GM12878 (cell line): ENCODE measurements at regions of chr15 and their contacts with region 1.

Region 1: GRCh38 chr15:89358755-89359439 is 24.3 kb upstream of the POLG start:
- DNase-seq: peak; percentile 40
- ATAC-seq: peak; percentile 96
- H3K4me3 ChIP-seq: peak overlapping the region; percentile 67; the same call in 1 of the 2 replicates
- H3K27ac ChIP-seq: no peak overlapping the region
- H3K4me1 ChIP-seq: no peaks in the 10 kb centered on the region
- H3K27me3 ChIP-seq: peaks cover 12 to 35% of the 10 kb centered on the region in 2 experiments
- CTCF ChIP-seq: peak; percentile 82 to 93 (median 89)
- EP300 ChIP-seq: no peak
- POLR2A ChIP-seq: no peak
- RAD21 ChIP-seq: peak; percentile 89

Region 2: DNA sequence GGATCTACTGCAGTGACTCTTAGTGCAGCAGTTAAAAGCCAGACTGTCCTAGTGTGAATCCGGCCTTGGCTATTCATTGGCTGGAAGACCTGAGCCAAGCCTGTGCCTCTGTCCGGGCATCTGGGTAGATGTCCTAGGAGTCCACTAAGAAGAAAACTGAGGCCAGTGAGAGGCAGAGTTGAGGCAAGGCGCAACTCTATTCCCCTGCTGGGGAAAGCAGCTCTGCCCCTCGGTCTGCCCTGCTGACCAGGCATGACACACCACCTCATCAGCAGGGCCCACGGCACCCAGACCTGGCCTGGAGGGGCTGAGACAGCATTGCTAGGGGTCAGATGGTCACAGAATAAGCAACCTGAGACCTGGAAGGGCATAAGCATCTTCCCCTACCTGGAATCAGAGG is 317.4 kb before region 1 on chr15:
- CTCF ChIA-PET with region 1: no interaction called
- POLR2A ChIA-PET with region 1: no interaction called
- RAD21 ChIA-PET with region 1: no interaction called
- SMC1A ChIA-PET with region 1: no interaction called
- in situ Hi-C with region 1: no loop called
- intact Hi-C with region 1: no loop called
- DNase-seq: no peak
- ATAC-seq: no peak
- H3K4me3 ChIP-seq: no peak overlapping the region
- H3K27ac ChIP-seq: no peak overlapping the region
- H3K4me1 ChIP-seq: no peaks in the 10 kb centered on the region
- H3K27me3 ChIP-seq: no peaks in the 10 kb centered on the region
- CTCF ChIP-seq: no peak
- EP300 ChIP-seq: no peak
- POLR2A ChIP-seq: no peak
- RAD21 ChIP-seq: no peak

Region 3: DNA sequence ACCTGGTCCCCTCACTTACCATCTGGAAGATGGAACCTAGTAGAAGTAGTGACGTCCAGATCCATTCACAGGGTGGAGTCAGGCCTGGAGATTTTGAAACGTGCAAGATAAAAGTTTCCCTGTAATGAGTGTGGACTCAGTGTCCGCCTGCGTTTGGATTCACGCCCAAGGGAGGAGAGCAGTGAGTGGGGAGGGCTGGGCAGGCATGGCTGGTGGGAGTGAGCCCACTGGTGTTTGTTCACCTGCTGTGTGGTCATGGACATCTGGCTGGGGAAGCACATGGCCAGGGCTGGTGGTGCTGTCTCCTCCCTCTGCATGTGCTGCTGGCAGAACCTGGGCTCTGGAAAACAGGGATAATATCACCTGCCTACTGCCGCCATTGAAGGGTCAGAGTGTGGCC is 174.5 kb before region 1 on chr15:
- CTCF ChIA-PET with region 1: no interaction called
- POLR2A ChIA-PET with region 1: no interaction called
- RAD21 ChIA-PET with region 1: no interaction called
- SMC1A ChIA-PET with region 1: no interaction called
- in situ Hi-C with region 1: no loop called
- intact Hi-C with region 1: no loop called
- DNase-seq: no peak
- ATAC-seq: no peak
- H3K4me3 ChIP-seq: no peak overlapping the region
- H3K27ac ChIP-seq: no peak overlapping the region
- H3K4me1 ChIP-seq: peaks cover 7% of the 10 kb centered on the region; the same call in 1 of the 2 replicates
- H3K27me3 ChIP-seq: no peaks in the 10 kb centered on the region
- CTCF ChIP-seq: no peak
- EP300 ChIP-seq: no peak
- POLR2A ChIP-seq: no peak
- RAD21 ChIP-seq: no peak

Region 4: DNA sequence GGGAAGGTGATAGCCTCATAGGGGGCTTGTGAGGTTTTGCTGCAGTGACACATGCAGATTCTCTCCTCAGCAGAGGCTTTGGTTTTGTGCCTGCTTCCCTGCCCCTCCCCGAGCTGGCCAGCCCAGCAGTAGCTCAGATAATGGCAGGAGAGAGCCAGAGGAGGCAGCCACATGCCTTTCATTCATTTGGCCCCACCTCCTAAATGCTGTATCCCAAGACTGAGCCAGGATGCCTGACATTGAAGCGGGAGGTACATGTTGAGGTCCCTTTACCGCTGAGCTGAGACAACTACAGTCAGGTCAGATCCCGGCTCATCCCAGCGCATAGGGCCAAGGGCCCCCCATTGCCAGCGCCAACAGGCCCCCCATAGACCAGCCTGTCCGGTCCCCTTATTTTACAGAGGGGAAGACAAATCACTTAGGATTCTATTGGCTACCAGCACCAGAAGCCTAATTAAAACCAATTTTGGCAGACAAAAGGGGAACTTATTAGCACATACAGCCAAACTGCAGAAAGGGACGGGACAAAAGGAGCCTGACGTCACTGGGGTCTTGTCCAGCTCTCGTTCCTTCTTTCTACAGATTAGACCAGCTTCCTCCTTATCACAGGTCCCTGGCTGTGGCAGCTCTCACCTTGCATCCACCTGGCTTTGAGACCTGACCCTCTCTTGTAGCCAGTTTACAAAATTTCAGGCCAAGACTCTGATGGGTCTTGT is 12.2 kb before region 1 on chr15:
- CTCF ChIA-PET with region 1: interaction called, 33 read pairs
- POLR2A ChIA-PET with region 1: no interaction called
- RAD21 ChIA-PET with region 1: interaction called, 3 read pairs
- SMC1A ChIA-PET with region 1: interaction called, 3 read pairs
- in situ Hi-C with region 1: no loop called
- intact Hi-C with region 1: no loop called
- DNase-seq: no peak
- ATAC-seq: no peak; the same call in 2 of the 3 replicates
- H3K4me3 ChIP-seq: no peak overlapping the region
- H3K27ac ChIP-seq: no peak overlapping the region
- H3K4me1 ChIP-seq: no peaks in the 10 kb centered on the region
- H3K27me3 ChIP-seq: peaks cover 0 to 8% of the 10 kb centered on the region in 2 experiments
- CTCF ChIP-seq: no peak
- EP300 ChIP-seq: no peak
- POLR2A ChIP-seq: no peak
- RAD21 ChIP-seq: no peak

Region 5: GRCh38 chr15:89391685-89392257 is 32.9 kb after region 1 on chr15:
- CTCF ChIA-PET with region 1: interaction called, 11 read pairs
- POLR2A ChIA-PET with region 1: no interaction called
- RAD21 ChIA-PET with region 1: no interaction called
- SMC1A ChIA-PET with region 1: interaction called, 3 read pairs
- in situ Hi-C with region 1: no loop called
- intact Hi-C with region 1: no loop called
- DNase-seq: no peak
- ATAC-seq: no peak
- H3K4me3 ChIP-seq: no peak overlapping the region
- H3K27ac ChIP-seq: no peak overlapping the region
- H3K4me1 ChIP-seq: no peaks in the 10 kb centered on the region
- H3K27me3 ChIP-seq: peaks cover 0 to 4% of the 10 kb centered on the region in 2 experiments; a peak in 2 of 4 replicates
- CTCF ChIP-seq: no peak
- EP300 ChIP-seq: no peak
- POLR2A ChIP-seq: no peak
- RAD21 ChIP-seq: no peak

Region 6: GRCh38 chr15:89416141-89416853 is 57.4 kb after region 1 on chr15:
- CTCF ChIA-PET with region 1: interaction called, 26 read pairs
- POLR2A ChIA-PET with region 1: no interaction called
- RAD21 ChIA-PET with region 1: interaction called, 3 read pairs
- SMC1A ChIA-PET with region 1: interaction called, 4 read pairs
- in situ Hi-C with region 1: no loop called
- intact Hi-C with region 1: no loop called
- DNase-seq: no peak
- ATAC-seq: peak; percentile 90
- H3K4me3 ChIP-seq: no peak overlapping the region
- H3K27ac ChIP-seq: no peak overlapping the region
- H3K4me1 ChIP-seq: no peaks in the 10 kb centered on the region
- H3K27me3 ChIP-seq: peaks cover 6 to 8% of the 10 kb centered on the region in 2 experiments; a peak in 3 of 4 replicates
- CTCF ChIP-seq: peak; percentile 93 to 99 (median 97)
- EP300 ChIP-seq: no peak
- POLR2A ChIP-seq: no peak
- RAD21 ChIP-seq: peak; percentile 55

Region 7: GRCh38 chr15:89430530-89431341 is 71.8 kb after region 1 on chr15:
- CTCF ChIA-PET with region 1: interaction called, 94 read pairs
- POLR2A ChIA-PET with region 1: no interaction called
- RAD21 ChIA-PET with region 1: interaction called, 26 read pairs
- SMC1A ChIA-PET with region 1: interaction called, 21 read pairs
- in situ Hi-C with region 1: loop called (anchors 5 kb)
- intact Hi-C with region 1: loop called (anchors 1 kb)
- DNase-seq: peak; percentile 31
- ATAC-seq: peak; percentile 99
- H3K4me3 ChIP-seq: peak overlapping the region; percentile 69
- H3K27ac ChIP-seq: no peak overlapping the region
- H3K4me1 ChIP-seq: peaks cover 2% of the 10 kb centered on the region; the same call in 1 of the 2 replicates
- H3K27me3 ChIP-seq: no peaks in the 10 kb centered on the region
- CTCF ChIP-seq: peak; percentile 93 to 94 (median 94); a peak in 5 of 6 replicates
- EP300 ChIP-seq: no peak
- POLR2A ChIP-seq: peak; percentile 42; the same call in 1 of the 2 replicates
- RAD21 ChIP-seq: peak; percentile 73

Region 8: GRCh38 chr15:89472785-89473256 is 113.9 kb after region 1 on chr15:
- CTCF ChIA-PET with region 1: interaction called, 87 read pairs
- POLR2A ChIA-PET with region 1: no interaction called
- RAD21 ChIA-PET with region 1: interaction called, 15 read pairs
- SMC1A ChIA-PET with region 1: interaction called, 17 read pairs
- in situ Hi-C with region 1: loop called (anchors 5 kb)
- intact Hi-C with region 1: loop called (anchors 1 kb)
- DNase-seq: no peak
- ATAC-seq: peak; percentile 99
- H3K4me3 ChIP-seq: no peak overlapping the region
- H3K27ac ChIP-seq: no peak overlapping the region
- H3K4me1 ChIP-seq: no peaks in the 10 kb centered on the region
- H3K27me3 ChIP-seq: peaks cover 0 to 6% of the 10 kb centered on the region in 2 experiments; a peak in 2 of 4 replicates
- CTCF ChIP-seq: peak; percentile 84 to 92 (median 91)
- EP300 ChIP-seq: no peak
- POLR2A ChIP-seq: no peak
- RAD21 ChIP-seq: peak; percentile 91